IMR-90 (cell line): ENCODE measurements at regions of chr16 and their contacts with region 1.

Region 1: DNA sequence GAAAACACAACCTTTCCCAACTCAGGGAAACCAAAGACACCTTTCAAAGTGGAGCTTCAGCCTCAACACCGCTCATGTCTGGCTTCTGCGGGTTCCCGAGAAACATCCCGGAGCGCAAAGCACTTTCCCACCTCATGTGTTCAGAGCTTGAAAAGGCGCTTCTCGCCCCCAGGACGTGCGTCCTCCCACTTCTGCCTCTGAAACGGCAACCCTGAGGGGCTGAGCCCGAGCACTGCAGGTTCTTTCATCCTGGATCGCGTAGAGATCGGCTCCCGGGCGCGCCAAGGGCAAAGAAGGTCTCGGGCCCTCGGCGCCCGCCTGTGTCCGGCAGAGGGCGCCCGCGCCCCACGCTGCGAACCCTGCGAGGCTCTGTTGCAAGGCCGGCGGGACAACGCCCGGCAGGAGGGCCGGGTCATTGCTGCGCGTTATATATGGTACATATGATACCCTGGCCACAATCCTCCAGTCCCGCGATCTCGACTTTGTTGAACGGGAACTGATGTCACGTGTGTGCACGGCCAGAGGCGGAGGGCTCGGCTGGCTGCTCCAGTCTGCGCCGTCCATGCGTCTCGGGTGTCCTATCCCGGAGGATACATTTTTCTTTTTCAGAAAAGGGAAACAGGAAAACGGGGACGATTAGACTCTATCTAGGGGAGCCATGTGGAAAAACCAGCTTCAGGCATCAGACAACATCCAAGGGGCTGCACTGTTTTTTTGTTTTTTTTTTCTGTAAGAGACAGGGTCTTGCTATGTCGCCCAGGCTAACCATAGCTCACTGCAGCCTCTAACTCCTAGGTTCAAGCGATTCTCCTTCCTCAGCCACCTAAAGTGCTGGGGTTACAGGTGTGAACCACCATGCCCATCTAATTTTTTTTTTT is 19.1 kb downstream of the COQ7 start:
- DNase-seq: peak; percentile 91
- ATAC-seq: peak; percentile 99
- H3K4me3 ChIP-seq: peak overlapping the region; percentile 41
- H3K27ac ChIP-seq: peak overlapping the region; percentile 0; the same call in 1 of the 2 replicates
- H3K4me1 ChIP-seq: peaks cover 2% of the 10 kb centered on the region
- H3K27me3 ChIP-seq: no peaks in the 10 kb centered on the region
- CTCF ChIP-seq: peak; percentile 99
- POLR2A ChIP-seq: peak; percentile 51; the same call in 1 of the 2 replicates
- RAD21 ChIP-seq: peak; percentile 99

Region 2: DNA sequence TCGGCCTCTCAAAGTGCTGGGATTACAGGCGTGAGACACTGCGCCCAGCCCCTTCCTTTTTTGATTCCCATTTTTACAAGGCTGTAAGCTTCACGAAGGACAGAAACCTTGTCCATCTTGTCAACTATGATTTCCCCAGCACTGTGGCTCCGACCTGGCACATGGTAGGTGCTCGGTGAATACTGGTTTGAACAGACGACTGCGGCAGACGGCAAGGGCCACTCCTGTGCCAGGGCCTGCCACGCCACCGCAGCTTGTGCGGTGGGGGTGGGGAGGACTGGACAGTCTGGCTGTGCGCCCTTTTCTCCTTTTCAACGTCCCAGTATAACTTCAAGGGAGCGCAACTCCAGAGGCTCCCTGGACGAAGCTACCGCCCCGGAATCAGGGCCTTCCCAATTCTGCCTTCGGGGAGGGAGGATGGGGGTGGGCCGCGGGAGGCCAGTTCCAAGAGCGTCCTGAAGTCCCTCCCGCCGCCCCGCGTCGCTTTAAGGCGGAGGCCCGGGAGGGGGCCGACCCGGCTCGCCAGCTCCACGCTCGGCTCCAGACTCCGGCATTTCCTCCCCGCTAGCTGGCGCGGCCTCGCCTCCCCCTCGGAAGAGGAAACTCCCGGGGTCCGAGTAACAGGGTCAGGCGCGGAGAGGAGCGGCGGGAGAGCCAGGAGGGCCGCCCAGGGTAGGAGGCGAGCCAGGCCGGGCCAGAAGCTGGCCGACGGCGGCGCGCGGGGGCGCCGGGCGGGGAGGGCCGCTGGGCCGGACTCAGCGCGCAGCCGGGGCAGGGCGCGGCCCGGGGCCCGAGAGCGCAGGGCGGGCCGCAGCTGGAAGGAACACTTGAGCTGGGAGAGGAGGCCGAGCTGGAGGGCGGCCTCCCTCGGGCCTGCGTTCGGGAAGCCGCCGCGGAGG is 27.1 kb after region 1 on chr16 and contains the start of gene ITPRIPL2:
- CTCF ChIA-PET with region 1: interaction called, 4 read pairs
- POLR2A ChIA-PET with region 1: no interaction called
- dilution Hi-C with region 1: no loop called
- in situ Hi-C with region 1: no loop called
- intact Hi-C with region 1: loop called (anchors 1 kb)
- DNase-seq: peak; percentile 85
- ATAC-seq: peak; percentile 88
- H3K4me3 ChIP-seq: peak within 1 kb of the TSS; percentile 69
- H3K27ac ChIP-seq: peak within 1 kb of the TSS; percentile 95
- H3K4me1 ChIP-seq: peaks cover 26% of the 10 kb centered on the region
- H3K27me3 ChIP-seq: no peaks in the 10 kb centered on the region
- CTCF ChIP-seq: no peak
- POLR2A ChIP-seq: peak; percentile 77
- RAD21 ChIP-seq: no peak
- total RNA-seq, gene ITPRIPL2: 11.1 and 15.0 TPM in 2 replicates

Region 3: DNA sequence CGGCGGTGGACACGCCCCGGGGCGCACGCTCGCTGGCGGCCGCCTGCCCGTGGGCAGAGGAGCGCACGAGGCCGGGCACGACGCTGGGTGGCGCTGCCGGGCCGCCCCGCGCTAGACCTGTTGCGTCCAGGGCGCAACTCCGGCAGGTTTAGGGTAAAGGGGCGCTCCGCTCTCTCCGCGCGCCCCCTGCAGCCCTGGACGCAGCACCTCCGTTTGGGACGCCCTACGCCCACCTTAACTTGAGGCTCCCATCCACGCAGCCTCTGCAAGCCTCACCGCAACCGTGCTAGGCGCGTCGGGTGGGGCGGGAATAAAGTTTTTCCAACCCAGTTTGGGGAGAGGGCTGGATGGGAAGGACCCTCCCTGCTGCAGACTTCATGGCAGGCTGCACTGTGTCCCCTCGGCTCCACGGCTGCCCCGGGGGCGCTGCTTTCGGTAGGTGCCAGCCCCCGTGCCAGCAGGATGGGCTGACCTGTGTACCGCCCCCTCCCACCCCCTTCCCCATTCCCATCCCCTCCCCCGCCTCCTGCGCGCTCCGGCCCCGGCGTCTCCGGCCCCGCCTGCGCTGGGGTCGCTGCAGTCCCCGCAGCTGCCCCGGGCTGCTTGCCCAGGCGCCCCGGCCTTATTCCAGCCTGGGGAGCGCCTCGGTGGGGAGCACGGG is 81.3 kb after region 1 on chr16 and contains the start of gene SYT17:
- CTCF ChIA-PET with region 1: interaction called, 3 read pairs
- POLR2A ChIA-PET with region 1: interaction called, 5 read pairs
- dilution Hi-C with region 1: no loop called
- in situ Hi-C with region 1: no loop called
- intact Hi-C with region 1: loop called (anchors 1 kb)
- DNase-seq: peak; percentile 48
- ATAC-seq: peak; percentile 97
- H3K4me3 ChIP-seq: peak within 1 kb of the TSS; percentile 43
- H3K27ac ChIP-seq: no peak within 1 kb of the TSS
- H3K4me1 ChIP-seq: peaks cover 2% of the 10 kb centered on the region
- H3K27me3 ChIP-seq: peaks cover 35% of the 10 kb centered on the region
- CTCF ChIP-seq: peak; percentile 79
- POLR2A ChIP-seq: no peak
- RAD21 ChIP-seq: peak; percentile 71
- total RNA-seq, gene SYT17: not detected in 2 replicates

Region 4: GRCh38 chr16:19179546-19180490 is 93.3 kb after region 1 on chr16:
- CTCF ChIA-PET with region 1: interaction called, 4 read pairs
- POLR2A ChIA-PET with region 1: no interaction called
- dilution Hi-C with region 1: no loop called
- in situ Hi-C with region 1: no loop called
- intact Hi-C with region 1: loop called (anchors 1 kb)
- DNase-seq: peak; percentile 33
- ATAC-seq: no peak
- H3K4me3 ChIP-seq: no peak overlapping the region
- H3K27ac ChIP-seq: no peak overlapping the region
- H3K4me1 ChIP-seq: no peaks in the 10 kb centered on the region; the same call in 1 of the 2 replicates
- H3K27me3 ChIP-seq: peaks cover 6% of the 10 kb centered on the region
- CTCF ChIP-seq: peak; percentile 47
- POLR2A ChIP-seq: no peak
- RAD21 ChIP-seq: peak; percentile 49

Region 5: DNA sequence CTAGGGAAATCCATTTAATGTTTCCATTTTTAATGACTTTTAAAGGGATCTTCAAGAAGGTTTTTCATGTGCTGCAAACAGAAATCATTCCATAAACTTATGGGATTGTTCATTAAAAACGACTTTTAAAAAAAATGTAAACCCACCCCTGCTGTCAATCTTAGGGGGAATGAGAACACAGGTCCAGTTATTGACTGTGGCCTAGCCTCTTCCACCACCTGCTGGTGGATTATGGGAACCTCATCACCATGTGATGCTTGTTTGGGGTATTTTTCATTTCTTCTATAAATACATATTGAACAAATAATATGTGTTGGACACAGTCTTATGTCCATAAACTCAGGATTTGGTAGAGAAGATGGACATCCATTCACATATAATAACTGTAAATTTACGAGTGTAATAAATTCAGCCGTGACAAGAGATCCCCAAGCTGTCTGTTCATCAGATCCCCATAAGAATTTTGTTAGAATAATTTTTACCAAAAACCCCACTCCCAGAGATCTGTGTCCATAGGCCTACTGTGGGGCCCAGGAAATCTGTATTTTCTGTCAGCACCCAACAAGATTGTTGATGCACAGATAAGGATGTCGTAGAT is 289.1 kb after region 1 on chr16:
- CTCF ChIA-PET with region 1: interaction called, 7 read pairs
- POLR2A ChIA-PET with region 1: no interaction called
- dilution Hi-C with region 1: no loop called
- in situ Hi-C with region 1: loop called (anchors 5 kb)
- intact Hi-C with region 1: loop called (anchors 1 kb)
- DNase-seq: peak; percentile 56
- ATAC-seq: peak; percentile 96
- H3K4me3 ChIP-seq: no peak overlapping the region
- H3K27ac ChIP-seq: no peak overlapping the region
- H3K4me1 ChIP-seq: no peaks in the 10 kb centered on the region
- H3K27me3 ChIP-seq: peaks cover 4% of the 10 kb centered on the region
- CTCF ChIP-seq: peak; percentile 92
- POLR2A ChIP-seq: 0 out of 2 replicates have a peak, but pooled peaks have one; percentile 29
- RAD21 ChIP-seq: peak; percentile 96

Region 6: DNA sequence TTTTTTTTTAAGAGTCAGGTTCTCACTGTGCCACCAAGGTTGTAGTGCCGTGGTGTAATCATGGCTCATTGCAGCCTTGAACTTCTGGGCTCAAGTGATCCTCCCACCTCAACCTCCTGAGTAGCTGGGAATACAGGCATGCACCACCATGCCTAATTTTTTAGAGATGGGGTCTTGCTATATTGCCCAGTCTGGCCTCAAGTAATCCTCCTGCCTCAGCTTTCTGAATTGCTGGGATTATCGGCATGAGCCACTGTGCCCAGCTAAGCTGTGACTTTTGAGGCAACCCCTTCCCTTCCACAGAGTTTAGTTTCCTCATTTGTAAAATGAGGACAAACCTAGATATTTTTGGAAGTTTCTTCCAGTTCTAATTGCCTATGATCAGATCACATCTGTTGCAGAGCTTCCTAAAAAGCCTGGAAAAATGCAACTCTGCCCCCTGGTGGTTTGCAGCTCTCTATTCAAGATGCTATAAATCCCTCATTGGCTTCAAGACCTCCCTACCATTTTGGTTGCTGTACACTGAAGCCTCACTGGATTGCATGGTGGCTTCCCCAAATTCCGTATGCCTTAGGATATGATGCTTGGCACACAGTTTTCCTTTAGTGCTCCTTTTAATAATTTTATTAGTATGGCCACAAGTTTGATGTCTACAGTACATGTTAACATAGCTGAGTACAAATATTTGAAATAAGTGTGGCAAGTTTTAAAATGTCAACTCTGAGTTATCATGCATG is 416.0 kb after region 1 on chr16:
- CTCF ChIA-PET with region 1: interaction called, 7 read pairs
- POLR2A ChIA-PET with region 1: no interaction called
- dilution Hi-C with region 1: no loop called
- in situ Hi-C with region 1: loop called (anchors 5 kb)
- intact Hi-C with region 1: loop called (anchors 1 kb)
- DNase-seq: peak; percentile 73
- ATAC-seq: peak; percentile 90
- H3K4me3 ChIP-seq: no peak overlapping the region
- H3K27ac ChIP-seq: no peak overlapping the region
- H3K4me1 ChIP-seq: no peaks in the 10 kb centered on the region
- H3K27me3 ChIP-seq: no peaks in the 10 kb centered on the region
- CTCF ChIP-seq: peak; percentile 69
- POLR2A ChIP-seq: no peak
- RAD21 ChIP-seq: peak; percentile 68

Region 7: DNA sequence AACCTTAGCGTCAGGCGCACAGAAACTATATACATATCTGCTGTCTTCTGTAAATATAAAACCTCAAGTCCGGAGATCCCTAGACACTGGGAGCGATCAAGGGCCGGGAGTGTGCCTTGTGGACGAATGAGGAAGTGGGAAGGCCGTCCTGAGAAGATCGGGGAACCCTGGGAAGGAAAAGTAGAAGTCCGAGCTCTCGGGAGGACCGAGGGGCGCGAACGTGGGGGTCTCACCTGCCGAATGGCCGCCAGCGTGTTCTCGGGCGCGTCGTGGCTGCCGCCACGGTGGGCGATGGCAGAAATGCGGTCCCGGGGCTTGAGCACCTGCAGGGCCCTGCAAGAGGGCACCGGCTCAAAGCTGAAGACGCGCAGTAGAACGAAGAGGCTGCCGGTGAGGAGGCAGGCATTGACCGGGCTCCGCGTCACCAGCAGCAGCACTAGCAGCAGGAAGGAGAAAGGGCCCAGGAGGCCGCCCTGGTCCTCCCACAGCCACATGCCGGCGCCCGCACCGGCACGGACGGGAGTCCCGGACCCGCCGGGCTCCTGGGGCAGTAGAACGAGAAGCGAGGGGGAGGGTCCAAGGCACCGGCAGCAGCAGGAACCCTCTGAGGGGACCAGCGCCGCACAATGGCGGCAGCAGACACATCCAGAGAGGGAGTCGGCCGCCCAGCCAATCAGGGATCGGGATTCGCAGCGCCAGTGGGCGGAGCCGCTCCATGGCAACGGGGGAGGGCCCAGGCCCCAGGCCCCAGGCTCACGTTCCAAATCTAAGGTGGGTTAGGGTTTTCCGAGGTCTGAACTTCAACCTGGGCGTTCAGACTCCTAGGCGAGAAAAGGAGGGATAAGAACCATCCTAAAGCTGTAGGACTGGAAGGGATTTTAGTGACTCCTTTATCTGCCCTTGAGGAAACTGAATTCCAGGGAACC is 435.2 kb after region 1 on chr16 and contains the start of gene GDE1:
- CTCF ChIA-PET with region 1: no interaction called
- POLR2A ChIA-PET with region 1: no interaction called
- dilution Hi-C with region 1: no loop called
- in situ Hi-C with region 1: no loop called
- intact Hi-C with region 1: loop called (anchors 5 kb)
- DNase-seq: peak; percentile 86
- ATAC-seq: peak; percentile 88
- H3K4me3 ChIP-seq: peak within 1 kb of the TSS; percentile 81
- H3K27ac ChIP-seq: peak within 1 kb of the TSS; percentile 72
- H3K4me1 ChIP-seq: peaks cover 3% of the 10 kb centered on the region; the same call in 1 of the 2 replicates
- H3K27me3 ChIP-seq: no peaks in the 10 kb centered on the region
- CTCF ChIP-seq: peak; percentile 42
- POLR2A ChIP-seq: peak; percentile 76
- RAD21 ChIP-seq: no peak; the same call in 1 of the 2 replicates
- total RNA-seq, gene GDE1: 62.4 and 64.2 TPM in 2 replicates

Region 8: GRCh38 chr16:19578378-19578971 is 491.9 kb after region 1 on chr16:
- CTCF ChIA-PET with region 1: no interaction called
- POLR2A ChIA-PET with region 1: no interaction called
- dilution Hi-C with region 1: no loop called
- in situ Hi-C with region 1: no loop called
- intact Hi-C with region 1: no loop called
- DNase-seq: no peak
- ATAC-seq: no peak
- H3K4me3 ChIP-seq: no peak overlapping the region
- H3K27ac ChIP-seq: no peak overlapping the region
- H3K4me1 ChIP-seq: no peaks in the 10 kb centered on the region
- H3K27me3 ChIP-seq: no peaks in the 10 kb centered on the region
- CTCF ChIP-seq: no peak
- POLR2A ChIP-seq: no peak
- RAD21 ChIP-seq: no peak